ENCODE measurements at regions of chr16 and their contacts with region 1.

Region 1: DNA sequence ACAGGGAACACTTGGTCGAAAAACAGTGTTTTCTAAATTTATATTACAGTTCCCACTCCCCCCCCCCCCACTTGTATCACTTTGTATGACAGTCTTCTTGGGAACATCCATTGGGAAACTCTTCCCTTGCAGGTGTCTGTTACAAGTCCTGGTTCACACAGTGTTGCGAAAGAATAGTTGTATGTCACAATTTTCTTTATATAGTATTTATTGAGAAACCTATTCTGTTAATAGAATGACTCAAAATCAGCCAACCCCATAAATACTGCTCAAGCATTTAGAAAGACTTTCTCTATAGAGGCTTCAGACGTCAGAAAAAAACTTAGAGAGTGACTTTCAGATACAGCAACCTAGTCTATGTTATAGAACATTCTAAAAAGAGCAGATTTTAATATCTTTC is 414.4 kb downstream of the WWOX start:
- DNase-seq: no peak
- CTCF ChIP-seq: no peak

Region 2: DNA sequence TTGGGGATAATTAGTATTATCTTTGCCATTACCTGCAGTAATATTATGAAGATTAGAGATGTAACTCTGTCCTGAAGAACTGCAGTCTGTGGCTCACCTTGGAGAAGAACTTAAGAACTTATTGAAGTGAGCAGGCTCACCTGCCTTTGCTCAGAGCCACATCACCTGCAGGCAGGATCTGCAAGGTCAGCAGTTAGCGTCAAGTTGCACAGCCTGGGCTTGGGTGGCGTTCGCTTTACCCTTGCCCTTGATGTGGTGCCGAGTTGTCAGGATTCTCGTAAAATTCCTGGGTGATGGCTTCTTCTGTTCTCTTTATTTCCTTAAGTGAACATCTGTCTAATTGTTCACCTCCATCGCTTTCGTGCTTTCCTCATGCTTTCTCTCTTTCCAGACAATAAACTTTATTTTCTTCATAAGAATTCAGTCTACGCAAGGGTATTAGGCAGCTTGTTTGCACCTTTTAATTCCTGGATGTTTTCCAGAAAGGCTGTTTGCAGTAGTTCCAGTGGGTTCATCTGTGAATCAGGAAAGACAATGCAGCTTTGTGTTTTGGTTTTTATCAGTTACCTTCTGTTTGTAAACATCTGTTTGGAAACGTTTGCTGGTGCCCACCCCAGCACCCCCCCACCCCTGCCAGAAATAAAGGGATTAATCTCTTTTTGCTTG is 160.1 kb before region 1 on chr16:
- CTCF ChIA-PET with region 1: no interaction called
- POLR2A ChIA-PET with region 1: no interaction called
- DNase-seq: no peak
- CTCF ChIP-seq: no peak

Region 3: DNA sequence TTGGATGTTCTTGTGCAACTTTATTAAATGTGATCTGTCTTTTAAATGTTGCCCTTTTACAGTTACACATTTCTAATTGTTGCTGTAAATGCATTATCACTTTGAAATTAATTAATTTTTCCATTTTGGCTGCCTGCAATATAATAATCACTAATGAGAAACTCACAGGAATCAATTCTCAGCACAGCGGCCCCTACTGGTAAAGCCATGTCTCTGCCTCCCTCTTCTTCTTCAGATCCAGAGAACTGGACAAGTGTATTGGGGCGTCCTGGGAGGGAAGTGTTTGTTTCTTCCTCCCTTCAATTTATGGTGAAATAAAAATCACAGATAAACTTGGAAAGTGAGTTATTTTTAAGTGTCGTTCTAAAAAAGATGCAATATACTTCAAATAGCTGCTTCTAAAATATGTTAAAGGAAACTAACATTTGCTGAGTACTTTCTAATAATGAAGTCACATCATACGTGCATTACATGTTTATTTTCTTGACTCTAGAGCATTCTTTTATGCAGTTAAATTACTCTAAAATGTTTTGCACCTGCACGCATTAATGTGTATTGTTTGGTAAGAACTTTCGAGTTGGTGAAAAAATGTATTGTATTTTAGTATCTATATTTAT is 76.4 kb before region 1 on chr16:
- CTCF ChIA-PET with region 1: no interaction called
- POLR2A ChIA-PET with region 1: no interaction called
- DNase-seq: peak; percentile 36
- CTCF ChIP-seq: peak; percentile 71

Region 4: DNA sequence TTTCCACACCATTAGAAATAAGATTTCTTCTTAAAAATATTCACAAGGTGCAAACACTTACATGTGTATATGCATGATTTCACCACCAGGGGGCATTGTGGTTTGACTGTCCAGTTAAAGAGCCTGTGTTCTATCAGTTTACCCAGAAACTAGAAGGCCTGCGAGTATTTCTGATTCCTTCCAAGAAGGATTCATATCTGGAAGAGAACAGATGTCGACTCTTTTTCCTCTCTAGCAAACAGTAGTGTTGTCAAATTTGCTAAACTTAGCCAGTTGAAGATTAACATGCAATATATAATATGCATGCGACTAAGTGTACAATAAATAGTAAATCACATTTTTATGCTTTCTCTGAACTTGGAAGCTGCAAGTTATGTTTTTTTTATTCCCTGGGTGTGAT is 10.2 kb before region 1 on chr16:
- CTCF ChIA-PET with region 1: interaction called, 15 read pairs
- POLR2A ChIA-PET with region 1: no interaction called
- DNase-seq: peak; percentile 30
- CTCF ChIP-seq: peak; percentile 55

Region 5: GRCh38 chr16:78530283-78530682 is 16.4 kb after region 1 on chr16:
- CTCF ChIA-PET with region 1: no interaction called
- POLR2A ChIA-PET with region 1: no interaction called
- DNase-seq: no peak
- CTCF ChIP-seq: no peak